CD4-positive, alpha-beta memory T cell (primary cell): ENCODE measurements at regions of chr1 and their contacts with region 1.

Region 1: DNA sequence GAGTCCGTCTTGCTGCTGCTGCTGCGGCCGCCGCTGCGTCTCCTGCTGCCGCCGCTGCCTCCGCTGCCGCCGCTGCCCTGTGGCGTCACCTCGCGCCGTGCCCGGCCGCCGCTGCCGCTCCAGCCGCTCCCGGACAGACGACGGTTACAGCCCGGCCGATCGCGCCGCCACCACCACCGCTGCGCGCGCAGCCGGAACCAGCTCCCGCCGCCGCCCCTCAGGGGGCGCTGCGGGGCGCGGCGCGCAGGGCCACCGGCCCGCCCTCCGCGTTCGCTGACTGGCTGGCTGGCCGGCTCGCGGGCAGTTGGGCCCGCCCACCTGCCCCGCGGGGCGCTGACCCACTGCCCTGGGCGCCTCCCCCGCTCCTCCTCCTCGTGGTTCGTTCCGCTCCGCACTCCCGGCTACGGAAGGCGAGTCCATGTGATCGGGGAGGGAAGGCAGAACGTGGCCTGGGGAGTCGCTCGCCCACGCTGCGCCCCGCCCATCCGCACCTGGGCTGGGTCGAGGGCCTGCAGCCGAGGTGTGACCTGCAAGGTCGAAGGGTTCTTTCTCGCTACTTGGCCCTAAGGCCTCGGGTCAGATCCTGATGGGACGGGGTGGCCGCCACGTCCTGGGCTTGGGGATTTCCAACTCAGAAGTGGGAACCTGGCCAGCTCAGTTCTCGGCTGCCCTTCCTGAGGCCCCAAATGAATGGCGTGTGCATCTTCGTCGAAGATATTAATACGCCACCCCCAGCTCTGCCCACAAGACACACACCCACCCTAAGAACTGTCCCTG is at the start of gene PTP4A2:
- DNase-seq: peak; percentile 79 to 89 (median 80)
- H3K4me3 ChIP-seq: peak within 1 kb of the TSS; percentile 43 to 95
- H3K4me3 Mint-ChIP-seq: peak within 1 kb of the TSS; percentile 92 to 100 (median 98)
- H3K27ac ChIP-seq: peak within 1 kb of the TSS; percentile 70
- H3K27ac Mint-ChIP-seq: peak within 1 kb of the TSS; percentile 96 to 98 (median 97)
- H3K4me1 ChIP-seq: peaks cover 77% of the 10 kb centered on the region
- H3K4me1 Mint-ChIP-seq: peaks cover 43 to 88% (median 62%) of the 10 kb centered on the region in 4 donors
- H3K27me3 ChIP-seq: no peaks in the 10 kb centered on the region
- H3K27me3 Mint-ChIP-seq: no peaks in the 10 kb centered on the region
- total RNA-seq, gene PTP4A2: 254 to 276 TPM

Region 2: DNA sequence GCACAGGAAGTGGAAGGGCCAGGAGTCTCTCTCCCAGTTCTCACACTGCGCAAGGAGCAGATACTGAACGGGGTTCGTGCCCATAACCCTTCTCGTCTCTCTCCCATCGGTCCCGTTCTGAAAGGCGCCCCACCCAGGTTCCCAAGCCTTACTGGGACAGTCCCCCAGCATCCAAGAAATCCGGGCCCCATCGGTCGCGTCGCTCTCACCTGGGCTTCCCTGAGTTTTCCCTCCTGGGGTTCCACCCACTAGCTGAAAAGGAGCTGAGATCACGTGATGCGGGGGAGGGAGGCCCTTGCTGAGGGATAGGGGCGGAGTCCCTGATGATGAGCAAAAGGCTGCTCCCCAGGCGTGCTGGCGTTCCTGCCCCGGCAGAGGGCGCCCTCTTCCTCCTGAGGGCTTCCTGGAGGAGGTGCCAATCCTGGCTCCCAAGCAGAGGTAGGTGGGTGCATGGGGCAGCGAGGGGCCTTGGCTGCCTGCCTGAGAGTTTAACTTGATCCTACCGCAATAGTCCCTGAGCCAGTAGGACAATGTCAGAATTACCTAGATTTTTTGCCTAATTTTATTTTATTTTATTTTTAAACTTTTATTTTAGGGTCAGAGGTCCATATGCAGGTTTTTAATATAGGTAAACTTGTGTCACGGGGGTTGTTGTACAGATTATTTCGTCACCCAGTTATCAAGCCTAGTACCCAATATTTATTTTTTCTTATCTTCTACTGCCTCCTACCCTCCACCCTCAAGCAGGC is 122.4 kb before region 1 on chr1 and contains the start of gene SPOCD1:
- CTCF ChIA-PET with region 1: interaction called, 11 read pairs
- POLR2A ChIA-PET with region 1: interaction called, 10 read pairs
- intact Hi-C with region 1: loop called (anchors 1 kb)
- DNase-seq: peak; percentile 78 to 84 (median 79)
- H3K4me3 ChIP-seq: no peak within 1 kb of the TSS
- H3K4me3 Mint-ChIP-seq: peak within 1 kb of the TSS in 2 of 8 donors; percentile 1 to 64
- H3K27ac ChIP-seq: no peak within 1 kb of the TSS
- H3K27ac Mint-ChIP-seq: peak within 1 kb of the TSS; percentile 32 to 88 (median 42)
- H3K4me1 ChIP-seq: peaks cover 8% of the 10 kb centered on the region
- H3K4me1 Mint-ChIP-seq: peaks cover 8 to 21% (median 14%) of the 10 kb centered on the region in 4 donors
- H3K27me3 ChIP-seq: no peaks in the 10 kb centered on the region
- H3K27me3 Mint-ChIP-seq: peaks cover 0 to 1% of the 10 kb centered on the region in 2 donors
- total RNA-seq, gene SPOCD1: 0.61 to 0.94 TPM

Region 3: GRCh38 chr1:31891280-31891679 is 47.1 kb before region 1 on chr1:
- CTCF ChIA-PET with region 1: interaction called, 5 read pairs
- POLR2A ChIA-PET with region 1: interaction called, 32 read pairs
- intact Hi-C with region 1: loop called (anchors 2 kb)
- DNase-seq: no peak
- H3K4me3 ChIP-seq: no peak overlapping the region
- H3K4me3 Mint-ChIP-seq: no peak overlapping the region
- H3K27ac ChIP-seq: no peak overlapping the region
- H3K27ac Mint-ChIP-seq: peak overlapping the region in 3 of 7 donors; percentile 54 to 94 (median 88)
- H3K4me1 ChIP-seq: peaks cover 17% of the 10 kb centered on the region
- H3K4me1 Mint-ChIP-seq: peaks cover 13 to 27% (median 21%) of the 10 kb centered on the region in 4 donors
- H3K27me3 ChIP-seq: no peaks in the 10 kb centered on the region
- H3K27me3 Mint-ChIP-seq: no peaks in the 10 kb centered on the region

Region 4: GRCh38 chr1:31961536-31961935 is 23.2 kb after region 1 on chr1:
- CTCF ChIA-PET with region 1: interaction called, 208 read pairs
- POLR2A ChIA-PET with region 1: interaction called, 545 read pairs
- intact Hi-C with region 1: loop called (anchors 1 kb)
- DNase-seq: no peak
- H3K4me3 ChIP-seq: no peak overlapping the region
- H3K4me3 Mint-ChIP-seq: peak overlapping the region in 4 of 8 donors; percentile 31 to 73 (median 50)
- H3K27ac ChIP-seq: no peak overlapping the region
- H3K27ac Mint-ChIP-seq: peak overlapping the region in 5 of 7 donors; percentile 56 to 89 (median 79)
- H3K4me1 ChIP-seq: peaks cover 55% of the 10 kb centered on the region
- H3K4me1 Mint-ChIP-seq: peaks cover 33 to 66% (median 49%) of the 10 kb centered on the region in 4 donors
- H3K27me3 ChIP-seq: no peaks in the 10 kb centered on the region
- H3K27me3 Mint-ChIP-seq: no peaks in the 10 kb centered on the region

Region 5: GRCh38 chr1:32063261-32063681 is 124.9 kb after region 1 on chr1:
- CTCF ChIA-PET with region 1: no interaction called
- POLR2A ChIA-PET with region 1: interaction called, 4 read pairs
- intact Hi-C with region 1: loop called (anchors 5 kb)
- DNase-seq: peak in 4 of 5 donors; percentile 16 to 41 (median 36)
- H3K4me3 ChIP-seq: no peak overlapping the region
- H3K4me3 Mint-ChIP-seq: no peak overlapping the region
- H3K27ac ChIP-seq: no peak overlapping the region
- H3K27ac Mint-ChIP-seq: peak overlapping the region in 6 of 7 donors; percentile 25 to 85 (median 70)
- H3K4me1 ChIP-seq: peaks cover 13% of the 10 kb centered on the region
- H3K4me1 Mint-ChIP-seq: peaks cover 8 to 23% (median 13%) of the 10 kb centered on the region in 4 donors
- H3K27me3 ChIP-seq: no peaks in the 10 kb centered on the region
- H3K27me3 Mint-ChIP-seq: no peaks in the 10 kb centered on the region

Region 6: DNA sequence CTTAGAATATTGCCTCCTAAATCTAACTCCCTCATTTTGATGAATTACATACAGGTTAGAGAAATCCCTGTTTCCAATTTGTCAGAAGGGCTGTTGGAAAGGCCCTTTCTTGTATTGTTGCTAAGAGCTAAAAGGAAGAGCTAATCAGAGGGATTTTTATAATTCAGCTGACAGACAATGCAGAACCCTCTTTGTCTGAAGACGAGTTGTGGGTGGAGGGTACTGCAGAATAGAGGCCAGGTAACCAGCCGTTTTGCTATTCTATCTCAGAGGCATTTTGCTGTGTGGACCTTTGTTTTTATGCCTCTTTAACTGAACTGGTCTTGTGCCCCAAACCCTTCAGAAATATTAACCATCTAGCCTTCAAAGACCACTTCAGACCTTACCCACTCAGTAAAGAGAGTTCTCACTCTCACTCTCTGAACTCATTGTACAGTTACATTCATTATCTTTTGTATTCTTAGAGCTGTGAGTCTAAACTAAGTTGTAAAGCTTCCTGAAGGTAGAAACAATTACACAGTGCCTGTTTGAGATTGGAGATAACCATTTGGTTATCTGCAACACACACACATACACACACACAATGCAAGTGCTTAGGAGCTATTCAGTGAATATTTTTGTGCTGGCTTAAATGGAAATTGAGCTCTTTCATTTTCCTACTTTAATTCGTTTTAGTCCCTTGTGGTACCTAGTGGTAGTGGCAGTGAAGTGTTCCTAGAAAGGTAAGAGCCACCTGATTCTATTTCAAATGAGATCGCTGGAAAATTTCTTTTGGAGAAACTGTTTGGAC is 189.2 kb after region 1 on chr1:
- CTCF ChIA-PET with region 1: no interaction called
- POLR2A ChIA-PET with region 1: no interaction called
- intact Hi-C with region 1: no loop called
- DNase-seq: no peak
- H3K4me3 ChIP-seq: no peak overlapping the region
- H3K4me3 Mint-ChIP-seq: peak overlapping the region in 3 of 8 donors; percentile 3 to 52 (median 17)
- H3K27ac ChIP-seq: no peak overlapping the region
- H3K27ac Mint-ChIP-seq: peak overlapping the region in 5 of 7 donors; percentile 11 to 60 (median 36)
- H3K4me1 ChIP-seq: peaks cover 52% of the 10 kb centered on the region
- H3K4me1 Mint-ChIP-seq: peaks cover 31 to 56% (median 43%) of the 10 kb centered on the region in 4 donors
- H3K27me3 ChIP-seq: no peaks in the 10 kb centered on the region
- H3K27me3 Mint-ChIP-seq: no peaks in the 10 kb centered on the region